Mammary epithelial cell (primary cell): ENCODE measurements at regions of chr17 and their contacts with region 1.

Region 1: DNA sequence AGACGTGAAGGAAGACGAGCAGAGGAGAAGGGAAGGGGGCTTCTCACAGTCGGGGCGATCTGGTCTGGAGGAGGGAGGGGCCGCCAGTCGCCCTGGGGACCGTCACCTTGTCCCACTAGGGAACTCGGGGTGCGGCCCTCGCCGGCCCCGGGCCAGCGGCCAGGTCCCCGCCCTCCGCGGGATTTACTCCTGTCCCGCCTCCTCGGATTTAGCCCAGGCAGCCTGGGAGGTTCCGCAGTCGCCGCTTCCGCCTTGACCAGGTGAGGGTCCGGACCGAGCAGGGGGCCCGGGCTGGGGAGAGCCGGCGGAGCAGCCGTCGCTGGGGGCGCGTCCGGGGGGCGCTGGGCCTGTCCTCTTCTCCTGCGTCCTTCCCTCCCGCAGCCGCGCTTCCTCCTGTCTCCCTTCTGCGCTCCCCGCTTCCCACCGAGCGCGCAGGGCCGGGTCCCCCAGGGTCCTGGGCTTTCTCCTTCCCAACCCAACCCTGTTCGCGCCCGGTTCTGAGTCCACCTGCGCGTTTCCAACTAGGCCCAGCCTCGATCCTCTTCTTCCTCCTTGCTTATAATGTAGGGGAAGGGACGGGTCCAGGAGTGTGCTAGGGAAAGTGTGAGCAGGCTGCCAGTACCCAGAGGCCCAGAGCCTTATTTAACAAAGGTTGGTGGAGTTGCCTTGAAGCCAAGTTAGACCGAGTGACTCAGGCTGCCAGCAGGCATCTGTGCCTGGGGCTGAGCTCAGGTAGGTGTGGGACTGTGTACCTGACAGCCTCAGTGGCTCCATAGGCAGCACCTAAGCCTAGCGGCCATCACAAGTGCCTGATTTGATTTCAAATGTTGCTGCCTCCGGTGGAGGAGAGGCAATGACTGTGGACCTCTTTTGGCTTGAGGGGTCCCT is at the start of gene TNK1:
- DNase-seq: peak; percentile 66
- H3K4me3 ChIP-seq: peak within 1 kb of the TSS; percentile 57 to 60 (median 57)
- H3K27ac ChIP-seq: peak within 1 kb of the TSS; percentile 50
- H3K4me1 ChIP-seq: peaks cover 7% of the 10 kb centered on the region
- H3K27me3 ChIP-seq: no peaks in the 10 kb centered on the region
- CTCF ChIP-seq: no peak
- total RNA-seq, gene TNK1: 13.3 to 15.9 TPM

Region 2: GRCh38 chr17:7394452-7395191 is 13.5 kb after region 1 on chr17 and contains the start of gene PLSCR3:
- CTCF ChIA-PET with region 1: no interaction called
- dilution Hi-C with region 1: no loop called
- in situ Hi-C with region 1: no loop called
- intact Hi-C with region 1: loop called (anchors 1 kb)
- DNase-seq: peak; percentile 88
- H3K4me3 ChIP-seq: peak within 1 kb of the TSS; percentile 75 to 98 (median 88)
- H3K27ac ChIP-seq: peak within 1 kb of the TSS; percentile 70
- H3K4me1 ChIP-seq: peaks cover 10% of the 10 kb centered on the region
- H3K27me3 ChIP-seq: no peaks in the 10 kb centered on the region
- CTCF ChIP-seq: peak in 1 of 2 donors; percentile 46
- total RNA-seq, gene PLSCR3: 32.3 to 127 TPM

Region 3: GRCh38 chr17:7740481-7741001 is 359.4 kb after region 1 on chr17:
- CTCF ChIA-PET with region 1: no interaction called
- dilution Hi-C with region 1: no loop called
- in situ Hi-C with region 1: no loop called
- intact Hi-C with region 1: no loop called
- DNase-seq: no peak
- H3K4me3 ChIP-seq: no peak overlapping the region
- H3K27ac ChIP-seq: no peak overlapping the region
- H3K4me1 ChIP-seq: peaks cover under 1% of the 10 kb centered on the region
- H3K27me3 ChIP-seq: peaks cover 3% of the 10 kb centered on the region
- CTCF ChIP-seq: no peak